ENCODE measurements at regions of chr3 and their contacts with region 1.

Region 1: DNA sequence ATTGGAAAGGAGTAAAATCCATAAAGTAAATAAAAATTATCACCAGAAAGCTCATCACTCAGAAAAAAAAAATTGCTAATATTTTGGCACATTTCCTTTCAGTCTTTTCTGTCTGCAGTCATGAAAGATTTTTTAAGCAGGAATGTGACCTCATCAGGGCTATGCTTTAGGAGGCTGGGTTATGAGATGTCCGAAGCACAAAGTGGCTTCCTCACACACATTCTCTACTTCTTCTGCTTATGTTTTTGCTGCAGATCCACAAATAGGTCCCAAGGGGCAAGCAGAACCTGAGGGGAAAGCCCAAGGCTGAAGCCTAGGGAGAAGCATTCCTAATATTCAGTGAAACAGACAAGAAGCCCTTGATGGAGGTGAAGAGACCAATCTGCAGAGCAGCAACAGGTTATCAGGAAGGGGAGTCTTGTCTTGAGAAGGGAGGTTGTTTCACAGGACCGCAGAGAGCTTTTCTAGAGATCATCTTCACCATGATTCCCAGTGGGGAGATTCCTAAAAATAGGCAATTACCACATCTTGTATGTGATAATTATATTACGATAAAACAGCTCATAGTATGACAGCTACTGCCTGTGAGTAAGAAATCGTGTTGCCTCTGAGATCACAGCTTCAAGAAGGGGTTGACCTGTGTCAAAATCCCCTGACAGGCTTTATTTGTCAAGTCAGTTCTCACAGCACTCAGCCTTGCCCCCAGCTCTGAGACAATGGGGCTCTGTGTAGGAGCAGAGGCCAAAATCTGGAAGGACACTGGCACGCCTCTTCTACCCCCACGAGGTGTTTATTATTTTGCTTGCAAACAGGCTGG is 60.5 kb downstream of the IGF2BP2 start:
- DNase-seq: no peak
- H3K4me3 ChIP-seq: no peak overlapping the region
- H3K27ac ChIP-seq: no peak overlapping the region
- H3K4me1 ChIP-seq: peaks cover 10 to 14% of the 10 kb centered on the region in 2 donors
- H3K27me3 ChIP-seq: no peaks in the 10 kb centered on the region
- CTCF ChIP-seq: no peak
- POLR2A ChIP-seq: no peak

Region 2: DNA sequence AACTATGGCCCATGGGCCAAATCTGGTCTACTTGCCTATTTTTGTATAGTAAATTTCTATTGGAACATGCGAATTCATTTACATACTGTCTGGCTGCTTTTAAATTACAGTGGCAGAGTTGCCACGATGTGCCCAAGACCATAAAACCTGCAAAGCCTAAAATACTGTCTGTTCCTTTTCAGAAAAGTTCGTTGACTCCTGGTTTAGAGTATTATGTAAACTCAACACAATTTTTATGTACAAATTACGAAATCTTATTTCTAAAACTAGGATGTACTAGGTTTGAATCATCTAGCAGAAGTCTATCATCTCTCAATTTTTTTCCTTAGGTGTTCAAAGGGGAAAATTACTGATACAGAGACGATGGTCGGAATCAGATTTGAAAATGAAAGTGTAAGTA is 151.4 kb before region 1 on chr3:
- intact Hi-C with region 1: no loop called
- DNase-seq: no peak
- H3K4me3 ChIP-seq: no peak overlapping the region
- H3K27ac ChIP-seq: no peak overlapping the region
- H3K4me1 ChIP-seq: no peaks in the 10 kb centered on the region
- H3K27me3 ChIP-seq: no peaks in the 10 kb centered on the region
- CTCF ChIP-seq: no peak
- POLR2A ChIP-seq: no peak

Region 3: DNA sequence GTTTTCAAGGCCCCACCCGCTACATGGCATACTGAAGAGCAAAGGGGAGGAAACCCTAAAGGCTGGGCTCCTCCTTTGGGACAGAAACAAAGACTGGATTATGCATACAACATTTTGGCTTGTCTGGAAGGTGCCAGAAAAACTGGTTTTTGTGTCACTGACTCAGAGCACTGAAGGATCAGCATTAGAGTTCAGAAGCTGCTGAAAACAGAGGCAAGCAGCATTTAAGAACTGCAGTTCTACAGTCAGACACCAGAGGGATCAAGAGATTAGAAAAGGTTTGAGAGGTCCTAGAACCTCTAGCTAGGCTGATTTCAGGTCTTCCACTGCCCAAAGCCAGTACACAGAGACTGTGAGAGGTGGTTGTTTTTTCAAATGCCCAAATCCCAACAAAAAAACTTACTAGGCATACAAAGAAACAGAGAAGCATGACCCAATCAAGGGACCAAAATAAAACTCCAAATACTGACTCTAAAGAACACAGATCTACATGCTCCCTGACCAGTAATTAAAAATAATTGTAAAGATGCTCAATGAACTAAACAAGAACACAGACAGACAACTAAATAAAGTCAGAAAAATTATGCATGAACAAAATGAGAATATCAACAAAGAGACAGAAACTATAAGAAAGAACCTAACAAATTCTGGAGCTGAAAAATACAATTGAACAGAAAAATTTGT is 87.1 kb before region 1 on chr3:
- intact Hi-C with region 1: loop called (anchors 10 kb)
- DNase-seq: no peak
- H3K4me3 ChIP-seq: no peak overlapping the region
- H3K27ac ChIP-seq: no peak overlapping the region
- H3K4me1 ChIP-seq: no peaks in the 10 kb centered on the region
- H3K27me3 ChIP-seq: no peaks in the 10 kb centered on the region
- CTCF ChIP-seq: peak in 5 of 6 experiments; percentile 13 to 70 (median 68)
- POLR2A ChIP-seq: no peak

Region 4: GRCh38 chr3:185807445-185808068 is 43.2 kb after region 1 on chr3:
- intact Hi-C with region 1: no loop called
- DNase-seq: no peak
- H3K4me3 ChIP-seq: no peak overlapping the region
- H3K27ac ChIP-seq: no peak overlapping the region
- H3K4me1 ChIP-seq: peaks cover 0 to 3% of the 10 kb centered on the region in 2 donors
- H3K27me3 ChIP-seq: no peaks in the 10 kb centered on the region
- CTCF ChIP-seq: no peak
- POLR2A ChIP-seq: no peak

Measured in thyroid gland (tissue), 4 donors.